ENCODE measurements at regions of chr6 and their contacts with region 1.

Region 1: DNA sequence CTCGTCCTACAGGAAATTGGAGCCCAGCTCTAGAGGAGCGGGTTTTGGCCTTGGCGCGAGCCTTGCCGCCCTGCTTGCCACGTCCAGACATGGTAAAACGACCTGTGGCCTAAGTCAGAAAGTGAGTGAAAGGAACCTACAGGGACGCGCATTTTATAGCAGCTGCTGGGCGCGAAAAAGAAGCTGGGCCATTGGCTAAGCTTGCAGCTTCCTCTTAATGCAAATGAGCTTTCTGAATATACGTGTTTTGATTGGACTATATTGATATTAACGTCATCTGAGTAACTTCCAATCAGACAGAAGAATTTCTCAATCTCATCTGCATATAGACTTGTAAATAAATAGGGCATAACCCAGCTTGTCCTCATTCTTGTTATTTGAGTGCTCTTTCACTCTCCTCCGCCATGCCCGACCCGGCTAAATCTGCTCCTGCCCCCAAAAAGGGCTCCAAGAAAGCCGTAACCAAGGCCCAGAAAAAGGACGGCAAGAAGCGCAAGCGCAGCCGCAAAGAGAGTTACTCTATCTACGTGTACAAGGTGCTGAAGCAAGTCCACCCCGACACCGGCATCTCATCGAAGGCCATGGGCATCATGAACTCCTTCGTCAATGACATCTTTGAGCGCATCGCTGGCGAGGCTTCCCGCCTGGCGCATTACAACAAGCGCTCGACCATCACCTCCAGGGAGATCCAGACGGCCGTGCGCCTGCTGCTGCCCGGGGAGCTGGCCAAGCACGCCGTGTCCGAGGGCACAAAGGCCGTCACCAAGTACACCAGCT is 18.9 kb downstream of the OR2B2 start:
- DNase-seq: peak; percentile 83 to 89
- ATAC-seq: peak; percentile 63
- H3K4me3 ChIP-seq: peak overlapping the region; percentile 13 to 89
- H3K27ac ChIP-seq: peak overlapping the region in 1 of 2 donors; percentile 19
- H3K4me1 ChIP-seq: no peaks in the 10 kb centered on the region
- H3K27me3 ChIP-seq: peaks cover 0 to 6% of the 10 kb centered on the region in 2 donors

Region 2: GRCh38 chr6:27177485-27178406 is 715.5 kb before region 1 on chr6:
- intact Hi-C with region 1: loop called in 1 of 2 experiments (anchors 5 kb)
- DNase-seq: peak; percentile 88 to 92
- ATAC-seq: peak; percentile 92
- H3K4me3 ChIP-seq: peak overlapping the region; percentile 91 to 98
- H3K27ac ChIP-seq: peak overlapping the region in 1 of 2 donors; percentile 83
- H3K4me1 ChIP-seq: no peaks in the 10 kb centered on the region
- H3K27me3 ChIP-seq: no peaks in the 10 kb centered on the region

Region 3: GRCh38 chr6:27188885-27189418 is 704.3 kb before region 1 on chr6:
- intact Hi-C with region 1: loop called in 1 of 2 experiments (anchors 5 kb)
- DNase-seq: peak in 1 of 2 donors; percentile 62
- ATAC-seq: peak; percentile 94
- H3K4me3 ChIP-seq: peak overlapping the region; percentile 75 to 77
- H3K27ac ChIP-seq: peak overlapping the region in 1 of 2 donors; percentile 7
- H3K4me1 ChIP-seq: no peaks in the 10 kb centered on the region
- H3K27me3 ChIP-seq: no peaks in the 10 kb centered on the region

Region 4: DNA sequence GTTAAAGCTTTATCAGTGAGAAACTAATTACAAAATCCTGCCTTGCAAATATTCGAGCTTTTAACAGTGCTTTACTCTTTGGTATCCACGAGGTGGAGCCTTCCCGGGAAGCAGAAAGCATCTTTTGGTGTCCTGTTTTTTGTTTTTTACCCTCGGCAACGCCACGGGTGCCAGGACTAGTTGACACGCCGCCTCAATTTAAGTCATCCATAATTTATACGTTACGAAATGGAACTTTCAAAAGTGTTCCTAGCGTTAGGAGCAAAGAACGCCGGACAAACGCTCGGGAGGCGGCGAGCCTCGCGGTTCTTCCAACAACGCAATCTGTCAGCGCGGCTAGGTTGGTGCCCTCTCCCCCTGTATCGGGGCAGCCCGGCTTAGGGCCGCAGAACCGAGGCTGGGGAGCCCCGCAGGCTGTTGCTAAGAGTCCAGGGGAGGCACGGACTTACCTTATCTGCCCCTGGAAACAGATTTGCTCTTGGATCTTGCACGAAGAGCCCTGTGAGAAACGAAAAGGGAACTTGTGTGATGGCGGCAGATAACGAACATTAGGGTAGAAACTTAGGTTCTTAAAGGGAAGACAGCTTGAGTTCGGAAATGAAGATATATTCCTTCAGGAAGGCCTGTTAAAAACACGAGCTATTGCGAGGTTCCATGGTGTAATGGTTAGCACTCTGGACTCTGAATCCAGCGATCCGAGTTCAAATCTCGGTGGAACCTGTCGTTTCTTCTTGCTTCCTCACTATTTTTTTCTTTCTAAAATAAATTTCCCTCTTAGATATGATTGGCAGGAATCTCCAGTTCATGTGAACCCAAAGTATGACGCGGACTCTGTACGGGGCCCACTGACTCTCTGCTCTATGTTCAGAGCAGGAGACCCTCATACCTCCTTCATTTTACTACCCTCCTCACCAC is 374.1 kb before region 1 on chr6:
- intact Hi-C with region 1: loop called in 1 of 2 experiments (anchors 5 kb)
- DNase-seq: peak; percentile 60 to 84
- ATAC-seq: peak; percentile 95
- H3K4me3 ChIP-seq: peak overlapping the region; percentile 69 to 94
- H3K27ac ChIP-seq: peak overlapping the region; percentile 85 to 93
- H3K4me1 ChIP-seq: no peaks in the 10 kb centered on the region
- H3K27me3 ChIP-seq: no peaks in the 10 kb centered on the region

Region 5: DNA sequence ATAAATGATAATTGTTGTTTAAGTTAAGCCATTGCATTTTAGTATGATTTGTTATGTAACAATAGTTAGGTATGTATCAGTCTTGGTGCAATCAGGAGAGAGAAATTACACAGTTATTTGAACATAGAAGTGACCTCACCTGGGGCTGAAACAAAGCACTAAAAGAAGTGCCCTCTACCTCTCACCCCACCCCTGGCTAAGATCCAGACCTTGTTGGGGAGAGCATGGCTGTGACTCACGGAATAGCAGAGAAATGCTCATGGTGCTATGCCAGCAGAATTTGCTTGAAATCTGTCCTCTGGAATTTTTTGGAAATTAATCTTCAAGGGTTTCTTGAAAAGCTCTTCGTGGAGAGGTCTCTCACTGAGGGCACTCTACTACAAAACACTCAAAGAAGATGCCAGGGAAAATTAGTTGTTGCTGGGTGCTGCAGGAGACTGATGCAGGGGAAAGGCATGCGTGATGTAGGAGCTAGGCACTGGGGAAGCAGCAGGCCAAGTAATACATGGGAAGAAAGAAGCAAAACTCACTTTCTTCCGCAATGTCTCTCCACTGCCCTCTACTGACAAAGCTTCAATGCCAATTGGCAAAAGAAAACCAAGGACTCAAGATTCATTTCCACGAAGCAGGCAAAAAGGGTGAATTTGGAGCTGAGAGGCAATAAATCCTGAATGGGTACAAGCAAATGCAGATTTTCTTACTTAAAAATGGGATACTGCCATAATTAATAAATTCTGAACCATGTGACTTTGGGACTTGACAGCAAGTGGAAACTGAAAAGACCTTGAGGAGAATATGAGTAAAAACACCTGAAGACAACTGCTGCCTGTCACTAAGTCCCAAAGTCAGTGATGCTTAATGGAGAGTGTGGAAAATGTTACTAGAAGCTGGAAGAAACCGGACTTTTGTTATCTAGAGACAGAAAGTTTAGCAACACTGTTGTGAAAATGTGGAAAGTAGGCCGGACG is 284.0 kb before region 1 on chr6:
- intact Hi-C with region 1: no loop called
- DNase-seq: no peak
- ATAC-seq: no peak
- H3K4me3 ChIP-seq: no peak overlapping the region
- H3K27ac ChIP-seq: no peak overlapping the region
- H3K4me1 ChIP-seq: no peaks in the 10 kb centered on the region
- H3K27me3 ChIP-seq: peaks cover 1 to 3% of the 10 kb centered on the region in 2 donors

Region 6: DNA sequence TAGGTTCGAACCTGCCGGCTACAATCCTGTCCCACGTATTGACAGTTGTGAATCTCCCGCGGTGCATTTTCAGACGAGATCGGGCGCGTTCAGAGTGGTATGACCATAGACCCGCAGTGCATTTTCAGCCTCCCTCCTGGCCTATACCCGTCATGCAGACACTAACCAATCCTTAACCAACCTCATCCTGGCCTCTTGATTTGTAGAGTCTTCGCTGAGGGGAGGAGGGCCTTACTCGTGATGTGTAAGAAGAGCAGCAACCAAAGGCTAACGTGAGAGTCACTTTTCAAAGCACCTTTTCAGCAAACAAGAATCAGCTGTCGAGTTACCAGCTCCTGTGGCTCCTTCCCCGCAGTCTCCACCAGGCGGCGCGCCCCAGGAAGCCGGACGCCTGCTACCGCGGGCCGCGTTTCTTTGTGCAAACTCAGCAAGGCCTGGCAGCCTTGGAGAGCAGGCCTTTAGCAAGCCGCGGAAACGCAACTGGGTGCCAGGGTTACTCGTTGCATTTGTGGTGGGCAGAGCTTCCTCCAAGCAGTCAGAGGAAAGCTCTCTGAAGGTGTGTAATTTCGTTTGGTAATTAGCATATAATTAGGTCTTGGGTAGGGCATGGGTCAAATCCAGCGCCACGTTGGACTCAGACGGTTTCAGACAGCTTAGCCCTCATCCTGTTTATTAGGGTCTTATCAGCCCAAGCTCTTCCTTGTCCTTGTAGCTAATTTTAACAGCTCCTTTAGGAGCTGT is 120.8 kb before region 1 on chr6:
- intact Hi-C with region 1: loop called (anchors 1 to 5 kb)
- DNase-seq: peak; percentile 92 to 95
- ATAC-seq: peak; percentile 93
- H3K4me3 ChIP-seq: no peak overlapping the region
- H3K27ac ChIP-seq: no peak overlapping the region
- H3K4me1 ChIP-seq: no peaks in the 10 kb centered on the region
- H3K27me3 ChIP-seq: no peaks in the 10 kb centered on the region

Region 7: GRCh38 chr6:27825025-27825793 is 68.0 kb before region 1 on chr6:
- intact Hi-C with region 1: no loop called
- DNase-seq: no peak
- ATAC-seq: no peak
- H3K4me3 ChIP-seq: peak overlapping the region in 1 of 2 donors; percentile 47
- H3K27ac ChIP-seq: peak overlapping the region in 1 of 2 donors; percentile 43
- H3K4me1 ChIP-seq: no peaks in the 10 kb centered on the region
- H3K27me3 ChIP-seq: peaks cover 0 to 2% of the 10 kb centered on the region in 2 donors

Region 8: DNA sequence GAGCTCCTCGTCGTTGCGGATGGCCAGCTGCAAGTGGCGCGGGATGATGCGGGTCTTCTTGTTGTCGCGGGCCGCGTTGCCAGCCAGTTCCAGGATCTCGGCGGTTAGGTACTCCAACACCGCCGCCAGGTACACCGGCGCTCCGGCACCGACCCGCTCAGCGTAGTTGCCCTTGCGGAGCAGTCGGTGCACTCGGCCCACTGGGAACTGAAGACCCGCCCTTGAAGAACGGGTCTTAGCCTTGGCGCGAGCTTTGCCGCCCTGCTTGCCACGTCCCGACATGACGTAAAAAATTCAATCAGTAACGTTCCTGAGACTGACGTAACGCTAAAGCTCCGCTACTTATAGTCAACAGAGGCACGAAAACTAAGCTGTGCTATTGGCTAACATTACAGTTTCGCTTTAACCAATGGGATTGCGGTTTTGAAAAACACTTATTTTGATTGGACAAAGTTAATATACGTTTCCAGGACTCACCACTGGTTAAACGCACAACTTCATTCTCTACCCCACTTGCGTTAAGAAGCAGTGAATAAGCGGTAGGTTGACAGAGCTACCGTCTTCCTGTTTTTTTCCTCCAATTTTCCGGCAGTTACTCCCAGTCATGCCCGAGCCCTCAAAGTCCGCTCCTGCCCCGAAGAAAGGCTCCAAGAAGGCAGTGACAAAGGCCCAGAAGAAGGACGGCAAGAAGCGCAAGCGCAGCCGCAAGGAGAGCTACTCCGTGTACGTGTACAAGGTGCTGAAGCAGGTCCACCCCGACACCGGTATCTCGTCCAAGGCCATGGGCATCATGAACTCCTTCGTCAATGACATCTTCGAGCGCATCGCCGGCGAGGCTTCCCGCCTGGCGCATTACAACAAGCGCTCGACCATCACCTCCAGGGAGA is 54.9 kb before region 1 on chr6:
- intact Hi-C with region 1: loop called in 1 of 2 experiments (anchors 2 kb)
- DNase-seq: peak; percentile 87 to 91
- ATAC-seq: peak; percentile 93
- H3K4me3 ChIP-seq: peak overlapping the region; percentile 67 to 79
- H3K27ac ChIP-seq: peak overlapping the region; percentile 91 to 97
- H3K4me1 ChIP-seq: no peaks in the 10 kb centered on the region
- H3K27me3 ChIP-seq: no peaks in the 10 kb centered on the region

Region 9: DNA sequence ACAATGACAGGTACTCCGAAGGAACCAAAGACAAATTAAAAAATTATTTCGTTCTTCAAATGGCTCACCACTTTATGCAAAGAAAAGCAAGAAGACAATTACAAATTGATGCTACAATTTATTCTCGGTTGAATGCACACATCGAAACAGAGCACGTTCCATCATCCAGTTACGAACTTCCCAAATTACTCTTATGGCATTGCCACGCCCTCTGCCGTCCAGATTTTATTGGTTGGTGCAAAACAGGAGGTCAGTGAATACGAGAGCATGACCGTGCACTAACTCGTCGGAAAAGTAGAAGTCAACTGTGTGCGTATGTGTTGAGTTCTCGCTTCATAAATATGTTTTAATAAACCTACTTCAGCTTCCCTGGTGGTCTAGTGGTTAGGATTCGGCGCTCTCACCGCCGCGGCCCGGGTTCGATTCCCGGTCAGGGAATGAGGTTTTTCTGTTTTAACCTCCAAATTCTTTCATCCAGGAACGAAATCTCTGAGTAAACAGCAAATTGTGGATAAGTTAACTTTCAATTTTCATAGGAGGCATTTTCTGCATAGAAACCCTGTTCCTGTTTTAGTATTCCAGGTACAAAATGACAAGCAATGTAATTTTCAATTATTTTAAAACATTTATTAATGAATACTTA is 1088.7 kb after region 1 on chr6:
- intact Hi-C with region 1: loop called in 1 of 2 experiments (anchors 10 kb)
- DNase-seq: peak; percentile 85 to 90
- ATAC-seq: peak; percentile 94
- H3K4me3 ChIP-seq: peak overlapping the region; percentile 57 to 95
- H3K27ac ChIP-seq: no peak overlapping the region
- H3K4me1 ChIP-seq: peaks cover 0 to 2% of the 10 kb centered on the region in 2 donors
- H3K27me3 ChIP-seq: no peaks in the 10 kb centered on the region

Measured in aorta (tissue), 5 donors.